Activated CD4-positive, alpha-beta T cell treated with anti-CD3 and anti-CD28 coated beads for 36 hours (primary cell): ENCODE measurements at regions of chr12 and their contacts with region 1.

Region 1: GRCh38 chr12:92505254-92506231 is 197.2 kb upstream of the PLEKHG7 start:
- DNase-seq: peak; percentile 77
- ATAC-seq: peak; percentile 56
- H3K4me3 Mint-ChIP-seq: peak overlapping the region; percentile 72
- H3K27ac Mint-ChIP-seq: peak overlapping the region; percentile 99
- H3K4me1 Mint-ChIP-seq: peaks cover 50% of the 10 kb centered on the region
- H3K27me3 Mint-ChIP-seq: no peaks in the 10 kb centered on the region

Region 2: DNA sequence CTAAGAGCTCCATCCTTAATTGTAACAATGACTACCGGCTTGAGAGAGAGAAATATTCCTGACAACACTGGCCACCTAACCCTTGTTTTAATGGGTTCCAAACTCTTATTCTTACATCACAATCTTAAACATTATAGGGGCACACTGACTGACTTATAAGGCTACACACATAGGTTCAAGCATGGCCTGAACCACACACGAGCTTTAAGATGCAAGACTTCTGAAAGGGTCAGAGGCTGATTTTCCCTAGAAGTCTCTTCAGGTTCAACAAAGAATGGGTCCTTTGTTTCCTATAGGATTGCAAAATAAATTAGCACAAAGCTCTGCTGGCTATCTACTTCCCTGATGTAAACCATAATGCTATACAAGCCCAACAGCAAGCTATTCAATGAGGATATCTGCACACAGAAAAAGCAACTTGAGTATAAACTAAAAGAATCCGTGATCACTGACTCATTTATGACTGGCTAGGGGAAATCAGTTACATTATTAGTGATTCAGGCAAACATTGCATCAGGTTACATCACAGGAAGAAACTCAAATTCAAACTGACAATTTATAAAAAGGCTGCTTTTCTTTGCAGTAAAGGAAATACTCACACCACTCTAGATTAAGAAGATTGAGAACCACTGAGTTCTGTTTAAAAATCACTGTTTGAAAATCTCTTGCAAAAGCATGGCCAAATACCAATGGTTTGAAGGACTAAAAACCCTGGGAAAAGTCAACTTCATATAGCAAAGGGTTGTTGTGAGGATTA is 368.4 kb before region 1 on chr12:
- CTCF ChIA-PET with region 1: interaction called, 3 read pairs
- POLR2A ChIA-PET with region 1: interaction called, 5 read pairs
- intact Hi-C with region 1: loop called in 1 of 2 experiments (anchors 5 kb)
- DNase-seq: no peak
- ATAC-seq: peak; percentile 47
- H3K4me3 Mint-ChIP-seq: peak overlapping the region; percentile 99
- H3K27ac Mint-ChIP-seq: peak overlapping the region; percentile 94
- H3K4me1 Mint-ChIP-seq: peaks cover 67% of the 10 kb centered on the region
- H3K27me3 Mint-ChIP-seq: no peaks in the 10 kb centered on the region

Region 3: DNA sequence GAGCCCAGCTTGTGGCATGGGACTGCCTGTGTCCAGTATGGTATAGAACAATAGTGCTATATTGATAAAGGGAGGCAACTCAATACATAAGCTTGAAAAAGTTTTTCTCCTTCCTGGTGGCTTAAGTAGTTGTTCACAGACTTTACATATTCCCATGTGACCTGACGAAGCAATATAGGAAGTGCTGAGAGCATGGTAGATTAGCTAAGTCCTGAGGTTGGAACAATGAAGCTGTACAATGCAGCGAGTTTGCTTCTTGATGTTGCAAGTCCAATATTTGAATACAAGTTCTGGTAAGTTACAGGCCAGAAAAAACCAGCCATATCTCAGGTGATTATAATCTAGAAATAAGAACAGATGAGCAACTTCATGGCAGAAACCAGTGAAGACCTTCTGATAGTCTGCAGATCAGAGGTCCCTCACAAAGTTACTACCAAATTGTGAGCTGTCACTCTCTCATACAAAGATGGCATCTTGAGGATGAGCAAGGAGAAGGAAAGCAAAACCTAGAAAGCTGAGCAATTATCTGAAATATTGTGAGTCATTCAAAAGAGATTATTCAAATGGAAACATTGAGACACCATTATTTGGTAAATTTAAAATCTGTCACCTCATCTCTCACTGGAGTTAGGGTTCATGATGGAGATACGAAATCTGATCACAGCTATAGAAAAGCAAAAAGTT is 287.0 kb before region 1 on chr12:
- CTCF ChIA-PET with region 1: no interaction called
- POLR2A ChIA-PET with region 1: no interaction called
- intact Hi-C with region 1: loop called (anchors 5 to 10 kb)
- DNase-seq: no peak
- ATAC-seq: peak; percentile 96
- H3K4me3 Mint-ChIP-seq: peak overlapping the region; percentile 20
- H3K27ac Mint-ChIP-seq: peak overlapping the region; percentile 84
- H3K4me1 Mint-ChIP-seq: peaks cover 24% of the 10 kb centered on the region
- H3K27me3 Mint-ChIP-seq: no peaks in the 10 kb centered on the region

Region 4: GRCh38 chr12:92408072-92408900 is 97.3 kb before region 1 on chr12:
- CTCF ChIA-PET with region 1: interaction called, 19 read pairs
- POLR2A ChIA-PET with region 1: interaction called, 4 read pairs
- intact Hi-C with region 1: loop called (anchors 1 to 2 kb)
- DNase-seq: peak; percentile 75
- ATAC-seq: peak; percentile 35
- H3K4me3 Mint-ChIP-seq: no peak overlapping the region
- H3K27ac Mint-ChIP-seq: peak overlapping the region; percentile 60
- H3K4me1 Mint-ChIP-seq: peaks cover 53% of the 10 kb centered on the region
- H3K27me3 Mint-ChIP-seq: no peaks in the 10 kb centered on the region

Region 5: DNA sequence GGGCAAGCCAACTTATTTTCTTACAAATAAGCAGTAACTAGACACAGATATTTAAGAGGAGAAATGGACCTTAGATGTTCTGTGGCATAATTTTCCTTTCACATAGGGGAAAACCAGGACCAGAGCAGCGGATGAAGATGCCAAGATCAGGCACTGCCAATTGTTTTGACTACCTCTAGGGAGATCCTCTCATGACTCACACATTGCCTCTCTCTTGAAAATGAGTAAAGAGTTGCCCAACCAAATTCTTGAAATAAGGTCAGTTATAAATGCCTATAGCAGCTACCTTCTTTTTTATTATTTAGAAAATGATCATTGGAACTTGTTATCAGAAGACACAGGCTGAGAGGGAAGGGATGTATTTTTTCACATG is 66.2 kb before region 1 on chr12:
- CTCF ChIA-PET with region 1: no interaction called
- POLR2A ChIA-PET with region 1: no interaction called
- intact Hi-C with region 1: no loop called
- DNase-seq: no peak
- ATAC-seq: peak; percentile 56
- H3K4me3 Mint-ChIP-seq: no peak overlapping the region
- H3K27ac Mint-ChIP-seq: no peak overlapping the region
- H3K4me1 Mint-ChIP-seq: peaks cover 28% of the 10 kb centered on the region
- H3K27me3 Mint-ChIP-seq: no peaks in the 10 kb centered on the region

Region 6: DNA sequence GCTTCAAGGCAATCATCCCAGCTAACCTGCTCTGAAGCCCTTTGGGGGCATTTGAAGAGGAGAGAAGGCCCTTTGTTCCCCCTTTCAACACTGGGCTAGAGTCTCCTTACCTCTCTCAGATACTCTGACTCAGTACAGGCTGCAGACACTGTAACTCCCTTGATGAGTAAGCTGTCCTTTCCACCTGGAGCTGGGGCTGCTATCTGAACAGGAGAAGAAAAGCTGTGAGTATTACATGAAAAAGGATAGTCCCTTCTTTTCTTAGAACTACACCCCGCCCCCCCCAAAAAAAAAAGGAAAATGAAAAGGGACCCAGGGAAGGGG is 10.7 kb after region 1 on chr12:
- CTCF ChIA-PET with region 1: interaction called, 16 read pairs
- POLR2A ChIA-PET with region 1: interaction called, 3 read pairs
- intact Hi-C with region 1: no loop called
- DNase-seq: peak; percentile 50
- ATAC-seq: peak; percentile 99
- H3K4me3 Mint-ChIP-seq: peak overlapping the region; percentile 5
- H3K27ac Mint-ChIP-seq: peak overlapping the region; percentile 81
- H3K4me1 Mint-ChIP-seq: peaks cover 34% of the 10 kb centered on the region
- H3K27me3 Mint-ChIP-seq: no peaks in the 10 kb centered on the region

Region 7: DNA sequence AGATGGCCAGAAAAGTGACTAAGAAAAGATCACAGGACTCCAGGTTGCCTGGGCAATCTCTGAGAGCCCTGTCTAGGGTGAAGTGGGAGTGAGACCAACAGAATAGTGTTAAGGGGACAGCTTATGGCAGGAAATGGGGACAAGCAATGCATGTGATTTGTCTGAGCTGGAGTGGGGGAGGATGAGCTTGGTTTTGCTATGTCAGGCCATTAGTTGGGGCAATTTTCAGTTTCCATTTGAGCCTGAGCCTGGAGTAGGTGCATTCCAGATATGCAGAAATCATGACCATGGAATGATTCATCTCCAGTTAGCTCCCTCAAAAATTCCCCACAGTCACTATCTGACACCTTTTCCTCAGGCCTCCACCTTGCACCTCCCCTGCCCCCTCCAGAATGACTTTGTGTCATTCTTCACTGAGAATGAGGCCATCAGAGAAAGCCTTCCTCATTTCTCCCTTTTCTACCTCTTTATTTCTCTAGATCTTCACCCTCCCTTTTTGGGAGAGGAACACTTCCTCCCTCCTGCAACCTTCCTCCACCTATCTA is 46.4 kb after region 1 on chr12:
- CTCF ChIA-PET with region 1: interaction called, 12 read pairs
- POLR2A ChIA-PET with region 1: interaction called, 9 read pairs
- intact Hi-C with region 1: loop called (anchors 1 kb)
- DNase-seq: peak; percentile 75
- ATAC-seq: peak; percentile 82
- H3K4me3 Mint-ChIP-seq: no peak overlapping the region
- H3K27ac Mint-ChIP-seq: no peak overlapping the region
- H3K4me1 Mint-ChIP-seq: peaks cover 16% of the 10 kb centered on the region
- H3K27me3 Mint-ChIP-seq: no peaks in the 10 kb centered on the region

Region 8: GRCh38 chr12:93002293-93003054 is 496.9 kb after region 1 on chr12:
- CTCF ChIA-PET with region 1: no interaction called
- POLR2A ChIA-PET with region 1: no interaction called
- intact Hi-C with region 1: no loop called
- DNase-seq: no peak
- ATAC-seq: no peak
- H3K4me3 Mint-ChIP-seq: no peak overlapping the region
- H3K27ac Mint-ChIP-seq: no peak overlapping the region
- H3K4me1 Mint-ChIP-seq: no peaks in the 10 kb centered on the region
- H3K27me3 Mint-ChIP-seq: no peaks in the 10 kb centered on the region

Region 9: DNA sequence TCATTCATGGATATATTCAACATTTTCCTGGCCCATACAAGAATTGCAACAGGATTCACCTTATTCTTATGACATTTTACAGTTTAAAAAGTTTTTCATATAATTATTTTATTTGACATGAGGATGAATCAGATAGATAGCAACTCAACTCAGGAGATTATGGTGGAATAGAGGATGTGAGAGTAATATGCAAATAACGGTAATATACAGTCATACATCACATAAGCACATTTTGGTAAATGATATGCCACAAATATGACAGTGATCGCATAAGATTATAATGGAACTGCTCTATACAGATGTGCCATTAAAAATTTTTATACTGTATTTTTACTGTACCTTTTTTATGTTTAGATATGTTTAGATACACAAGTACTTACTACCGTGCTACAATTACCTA is 1147.5 kb after region 1 on chr12:
- CTCF ChIA-PET with region 1: no interaction called
- POLR2A ChIA-PET with region 1: no interaction called
- intact Hi-C with region 1: no loop called
- DNase-seq: no peak
- ATAC-seq: no peak
- H3K4me3 Mint-ChIP-seq: no peak overlapping the region
- H3K27ac Mint-ChIP-seq: no peak overlapping the region
- H3K4me1 Mint-ChIP-seq: no peaks in the 10 kb centered on the region
- H3K27me3 Mint-ChIP-seq: peaks cover 2% of the 10 kb centered on the region